Activated CD4-positive, alpha-beta T cell treated with anti-CD3 and anti-CD28 coated beads for 36 hours (primary cell): ENCODE measurements at regions of chr10 and their contacts with region 1.

Region 1: DNA sequence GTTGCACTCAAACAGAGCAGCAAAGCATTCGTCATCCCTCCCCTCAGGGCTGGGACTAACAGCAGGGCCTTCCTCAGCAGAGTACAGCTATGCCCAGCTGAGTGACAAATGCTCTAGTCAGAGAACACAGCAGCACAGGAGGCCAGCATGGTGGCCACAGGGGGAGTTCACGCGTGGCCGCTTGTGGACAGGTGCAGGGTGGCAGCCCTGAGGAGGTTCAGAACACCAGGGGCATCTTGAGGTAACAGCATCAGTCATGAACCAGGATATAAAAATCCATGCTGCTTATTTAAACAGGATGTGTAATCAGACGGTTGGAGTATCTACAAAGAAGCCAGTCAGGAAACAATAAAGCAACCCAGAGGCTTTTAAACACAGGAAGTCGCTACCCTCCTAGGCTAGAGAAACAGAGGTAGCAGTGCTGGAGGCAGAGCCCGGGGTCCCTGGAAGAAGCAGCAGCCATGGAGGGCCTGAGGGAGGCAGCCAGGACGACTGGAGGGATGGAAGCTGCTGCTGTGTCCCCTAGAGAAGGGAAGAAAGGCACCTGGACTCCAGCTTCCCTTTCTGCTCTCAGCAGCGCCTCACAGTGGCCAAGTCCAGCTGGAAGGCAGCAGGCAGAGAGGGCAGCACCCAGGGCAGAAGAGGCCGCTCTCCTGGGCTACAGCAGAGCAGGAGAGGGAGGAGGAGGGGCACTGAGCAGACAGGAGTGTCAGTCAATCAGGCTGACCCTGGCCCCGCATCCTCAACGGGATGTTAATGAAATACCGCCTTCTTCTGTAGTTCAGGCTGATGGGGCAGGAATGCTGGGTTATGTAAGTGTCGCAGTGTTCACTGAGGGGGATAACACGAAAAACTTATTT is 70.8 kb upstream of the UCN3 start:
- DNase-seq: peak; percentile 88
- ATAC-seq: peak; percentile 62
- H3K4me3 Mint-ChIP-seq: peak overlapping the region; percentile 76
- H3K27ac Mint-ChIP-seq: peak overlapping the region; percentile 98
- H3K4me1 Mint-ChIP-seq: peaks cover 72% of the 10 kb centered on the region
- H3K27me3 Mint-ChIP-seq: no peaks in the 10 kb centered on the region

Region 2: DNA sequence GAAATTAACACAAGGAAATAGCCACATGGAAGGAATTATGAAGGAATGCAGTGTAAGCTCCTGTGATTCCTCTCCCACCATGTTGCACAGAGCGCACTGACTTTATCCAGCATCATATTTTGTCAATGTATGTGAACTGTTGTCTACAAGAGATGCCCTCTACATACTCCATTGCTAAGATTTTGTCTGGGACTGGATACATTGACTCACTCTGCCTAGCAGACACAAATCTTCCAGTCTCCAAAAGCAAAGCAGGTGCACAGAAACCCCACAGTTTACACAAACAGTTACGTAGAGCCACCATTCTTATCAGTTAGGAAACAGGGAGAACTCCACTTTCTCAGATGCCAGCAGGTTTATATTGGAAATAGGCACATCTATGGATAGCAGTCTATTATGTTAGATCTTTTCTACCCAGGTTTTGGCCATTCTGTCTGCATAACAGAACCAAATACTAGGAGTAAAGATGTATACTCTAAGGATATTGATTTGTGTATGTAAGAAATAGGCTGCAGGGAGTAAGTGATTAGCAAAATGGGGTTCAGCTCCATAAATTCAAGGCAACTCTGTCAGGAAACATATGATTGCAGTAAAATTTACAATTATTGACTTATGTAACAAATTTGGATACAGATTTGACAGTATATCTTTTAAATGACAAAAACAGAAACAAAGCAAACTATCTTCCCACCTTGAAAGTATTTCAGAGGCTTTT is 291.8 kb before region 1 on chr10:
- CTCF ChIA-PET with region 1: no interaction called
- POLR2A ChIA-PET with region 1: no interaction called
- intact Hi-C with region 1: no loop called
- DNase-seq: no peak
- ATAC-seq: no peak
- H3K4me3 Mint-ChIP-seq: no peak overlapping the region
- H3K27ac Mint-ChIP-seq: no peak overlapping the region
- H3K4me1 Mint-ChIP-seq: no peaks in the 10 kb centered on the region
- H3K27me3 Mint-ChIP-seq: peaks cover 3% of the 10 kb centered on the region

Region 3: DNA sequence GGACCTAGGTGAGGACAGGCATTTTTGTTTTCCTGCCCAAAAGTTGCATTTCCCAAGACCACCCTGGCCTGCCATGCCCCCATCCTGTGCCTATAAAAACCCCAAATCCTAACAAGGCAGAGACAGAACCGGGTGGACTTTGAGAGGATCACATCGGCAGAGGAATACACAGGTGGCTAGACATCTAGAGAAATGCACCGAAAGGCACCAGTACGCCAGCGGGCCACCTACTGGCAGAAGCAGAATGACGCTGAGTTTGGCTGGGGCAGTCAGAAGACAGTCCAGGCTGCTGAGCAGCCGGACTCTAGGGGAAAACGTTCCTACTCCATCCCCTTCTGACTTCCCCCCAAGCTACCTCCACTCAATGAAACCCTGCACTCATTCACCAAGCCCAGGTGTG is 94.5 kb before region 1 on chr10:
- CTCF ChIA-PET with region 1: no interaction called
- POLR2A ChIA-PET with region 1: no interaction called
- intact Hi-C with region 1: no loop called
- DNase-seq: no peak
- ATAC-seq: no peak
- H3K4me3 Mint-ChIP-seq: no peak overlapping the region
- H3K27ac Mint-ChIP-seq: no peak overlapping the region
- H3K4me1 Mint-ChIP-seq: no peaks in the 10 kb centered on the region
- H3K27me3 Mint-ChIP-seq: peaks cover 7% of the 10 kb centered on the region

Region 4: GRCh38 chr10:5274795-5275194 is 19.1 kb before region 1 on chr10:
- CTCF ChIA-PET with region 1: no interaction called
- POLR2A ChIA-PET with region 1: no interaction called
- intact Hi-C with region 1: no loop called
- DNase-seq: no peak
- ATAC-seq: no peak
- H3K4me3 Mint-ChIP-seq: no peak overlapping the region
- H3K27ac Mint-ChIP-seq: no peak overlapping the region
- H3K4me1 Mint-ChIP-seq: no peaks in the 10 kb centered on the region
- H3K27me3 Mint-ChIP-seq: peaks cover 2% of the 10 kb centered on the region

Region 5: DNA sequence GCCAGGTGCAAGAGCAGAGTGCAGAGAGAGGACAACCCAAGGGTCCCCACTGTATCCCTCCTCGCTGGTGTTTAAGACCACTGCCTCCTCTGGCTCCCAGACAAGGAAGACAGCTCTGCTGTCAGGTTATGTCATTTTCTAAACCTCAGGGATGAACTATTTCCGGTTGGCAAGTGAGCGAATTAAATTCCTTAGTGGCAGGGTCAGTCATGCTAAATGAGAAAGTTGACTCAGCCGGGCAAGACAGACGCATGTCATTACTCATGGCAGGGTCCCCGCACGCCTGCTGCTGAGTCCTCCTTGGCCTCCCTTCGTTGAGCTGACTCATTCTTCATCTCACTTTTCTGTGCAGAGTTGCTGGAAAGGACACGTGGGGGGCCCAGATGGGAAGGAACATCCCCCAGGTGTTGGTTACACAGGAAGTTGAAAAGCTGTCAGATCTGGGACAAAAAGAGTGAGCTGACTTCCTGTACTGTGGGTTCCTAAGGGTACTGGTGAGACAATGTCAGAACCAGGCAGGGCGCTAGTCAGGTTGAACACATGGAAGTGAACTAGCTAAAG is 23.7 kb after region 1 on chr10:
- CTCF ChIA-PET with region 1: interaction called, 7 read pairs
- POLR2A ChIA-PET with region 1: no interaction called
- intact Hi-C with region 1: loop called (anchors 1 to 2 kb)
- DNase-seq: peak; percentile 91
- ATAC-seq: peak; percentile 98
- H3K4me3 Mint-ChIP-seq: peak overlapping the region; percentile 17
- H3K27ac Mint-ChIP-seq: peak overlapping the region; percentile 72
- H3K4me1 Mint-ChIP-seq: peaks cover 39% of the 10 kb centered on the region
- H3K27me3 Mint-ChIP-seq: no peaks in the 10 kb centered on the region